Heart left ventricle (tissue), 16 donors: ENCODE measurements at regions of chr7 and their contacts with region 1.

Region 1: GRCh38 chr7:143490717-143491306 is 13.1 kb downstream of the TAS2R41 start:
- DNase-seq: peak in 4 of 5 donors; percentile 23 to 54 (median 34)
- ATAC-seq: peak in 3 of 4 donors; percentile 40 to 66 (median 53)
- H3K4me3 ChIP-seq: no peak overlapping the region
- H3K27ac ChIP-seq: no peak overlapping the region
- H3K4me1 ChIP-seq: peaks cover 0 to 60% (median 9%) of the 10 kb centered on the region in 12 donors
- H3K27me3 ChIP-seq: no peaks in the 10 kb centered on the region
- CTCF ChIP-seq: peak; percentile 30 to 70 (median 52)
- POLR2A ChIP-seq: no peak

Region 2: GRCh38 chr7:143429770-143430698 is 60.8 kb before region 1 on chr7:
- intact Hi-C with region 1: loop called in 1 of 10 experiments (anchors 10 kb)
- DNase-seq: no peak
- ATAC-seq: no peak
- H3K4me3 ChIP-seq: no peak overlapping the region
- H3K27ac ChIP-seq: no peak overlapping the region
- H3K4me1 ChIP-seq: peaks cover 0 to 5% (median 0%) of the 10 kb centered on the region in 12 donors
- H3K27me3 ChIP-seq: no peaks in the 10 kb centered on the region
- CTCF ChIP-seq: no peak
- POLR2A ChIP-seq: no peak

Region 3: DNA sequence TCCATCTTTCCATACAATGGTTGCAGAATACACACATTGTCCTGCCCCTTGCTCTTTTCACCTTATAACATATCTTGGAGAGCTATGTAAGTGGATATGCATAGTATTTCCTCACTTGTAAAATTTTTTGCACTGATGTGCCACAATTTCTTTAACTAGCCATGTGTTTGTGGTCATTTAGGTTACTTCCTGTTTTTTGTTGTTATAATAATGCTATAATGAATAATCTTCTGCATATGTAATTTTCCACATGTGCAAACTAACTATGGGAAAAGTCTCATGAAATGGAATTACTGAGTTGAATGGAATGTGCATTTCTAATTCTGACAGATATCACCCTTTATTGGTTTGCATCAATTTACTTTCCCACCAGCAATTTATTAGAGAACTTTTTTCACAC is 10.3 kb before region 1 on chr7:
- intact Hi-C with region 1: loop called in 1 of 10 experiments (anchors 1 kb)
- DNase-seq: no peak
- ATAC-seq: no peak
- H3K4me3 ChIP-seq: no peak overlapping the region
- H3K27ac ChIP-seq: no peak overlapping the region
- H3K4me1 ChIP-seq: peaks cover 0 to 14% (median 0%) of the 10 kb centered on the region in 12 donors
- H3K27me3 ChIP-seq: no peaks in the 10 kb centered on the region
- CTCF ChIP-seq: no peak
- POLR2A ChIP-seq: no peak